GM12878 (cell line): ENCODE measurements at regions of chr4 and their contacts with region 1.

Region 1: DNA sequence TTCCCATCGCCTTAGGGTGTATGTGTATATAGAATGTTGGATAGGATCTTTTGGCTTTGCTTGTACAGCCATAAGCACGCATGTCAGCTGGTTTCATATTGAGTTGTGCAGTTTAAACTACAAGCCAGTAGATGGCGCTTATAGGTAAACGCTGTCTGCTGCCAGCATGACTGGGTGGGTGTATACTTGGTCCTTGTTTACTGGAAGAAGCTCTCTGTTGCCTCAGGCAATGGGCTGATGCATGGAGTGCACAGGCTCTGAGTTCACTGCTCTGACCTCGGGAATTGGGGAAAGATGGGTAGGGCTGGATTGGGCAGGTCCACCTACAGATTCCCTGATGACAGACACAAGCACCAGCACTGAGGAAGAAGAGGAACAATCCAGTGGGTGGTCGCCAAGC is 831.5 kb downstream of the STIM2 start:
- DNase-seq: no peak
- ATAC-seq: peak; percentile 90
- H3K4me3 ChIP-seq: no peak overlapping the region
- H3K27ac ChIP-seq: no peak overlapping the region
- H3K4me1 ChIP-seq: no peaks in the 10 kb centered on the region
- H3K27me3 ChIP-seq: no peaks in the 10 kb centered on the region
- CTCF ChIP-seq: peak; percentile 53 to 64 (median 53)
- EP300 ChIP-seq: no peak
- POLR2A ChIP-seq: no peak
- RAD21 ChIP-seq: peak; percentile 53

Region 2: DNA sequence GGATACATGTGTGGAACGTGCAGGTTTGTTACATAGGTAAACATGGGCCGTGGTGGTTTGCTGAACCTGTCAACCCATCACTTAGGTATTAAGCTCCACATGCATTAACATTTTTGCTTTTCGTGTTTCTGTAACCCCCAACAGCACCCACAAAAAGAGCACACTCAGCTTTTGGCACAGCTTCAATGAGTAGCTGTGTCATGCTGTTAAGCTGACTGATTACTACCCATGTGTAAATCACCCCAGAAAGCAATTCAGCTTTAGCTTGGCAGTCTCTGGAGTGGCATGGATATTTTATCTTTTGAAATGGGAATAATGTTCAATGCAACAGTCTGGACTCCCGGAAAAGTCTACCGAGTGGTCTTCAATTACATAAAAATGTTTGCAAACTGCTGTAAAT is 97.2 kb before region 1 on chr4:
- CTCF ChIA-PET with region 1: no interaction called
- POLR2A ChIA-PET with region 1: no interaction called
- RAD21 ChIA-PET with region 1: no interaction called
- SMC1A ChIA-PET with region 1: no interaction called
- in situ Hi-C with region 1: no loop called
- intact Hi-C with region 1: no loop called
- DNase-seq: no peak
- ATAC-seq: no peak
- H3K4me3 ChIP-seq: no peak overlapping the region
- H3K27ac ChIP-seq: no peak overlapping the region
- H3K4me1 ChIP-seq: no peaks in the 10 kb centered on the region
- H3K27me3 ChIP-seq: no peaks in the 10 kb centered on the region
- CTCF ChIP-seq: no peak
- EP300 ChIP-seq: no peak
- POLR2A ChIP-seq: no peak
- RAD21 ChIP-seq: no peak

Region 3: GRCh38 chr4:27702730-27703431 is 10.7 kb after region 1 on chr4:
- CTCF ChIA-PET with region 1: interaction called, 35 read pairs
- POLR2A ChIA-PET with region 1: no interaction called
- RAD21 ChIA-PET with region 1: interaction called, 5 read pairs
- SMC1A ChIA-PET with region 1: interaction called, 15 read pairs
- in situ Hi-C with region 1: no loop called
- intact Hi-C with region 1: no loop called
- DNase-seq: no peak
- ATAC-seq: peak; percentile 80
- H3K4me3 ChIP-seq: no peak overlapping the region
- H3K27ac ChIP-seq: no peak overlapping the region
- H3K4me1 ChIP-seq: no peaks in the 10 kb centered on the region
- H3K27me3 ChIP-seq: no peaks in the 10 kb centered on the region
- CTCF ChIP-seq: peak; percentile 10 to 52 (median 36); a peak in 3 of 6 replicates
- EP300 ChIP-seq: no peak
- POLR2A ChIP-seq: no peak
- RAD21 ChIP-seq: peak; percentile 36

Region 4: DNA sequence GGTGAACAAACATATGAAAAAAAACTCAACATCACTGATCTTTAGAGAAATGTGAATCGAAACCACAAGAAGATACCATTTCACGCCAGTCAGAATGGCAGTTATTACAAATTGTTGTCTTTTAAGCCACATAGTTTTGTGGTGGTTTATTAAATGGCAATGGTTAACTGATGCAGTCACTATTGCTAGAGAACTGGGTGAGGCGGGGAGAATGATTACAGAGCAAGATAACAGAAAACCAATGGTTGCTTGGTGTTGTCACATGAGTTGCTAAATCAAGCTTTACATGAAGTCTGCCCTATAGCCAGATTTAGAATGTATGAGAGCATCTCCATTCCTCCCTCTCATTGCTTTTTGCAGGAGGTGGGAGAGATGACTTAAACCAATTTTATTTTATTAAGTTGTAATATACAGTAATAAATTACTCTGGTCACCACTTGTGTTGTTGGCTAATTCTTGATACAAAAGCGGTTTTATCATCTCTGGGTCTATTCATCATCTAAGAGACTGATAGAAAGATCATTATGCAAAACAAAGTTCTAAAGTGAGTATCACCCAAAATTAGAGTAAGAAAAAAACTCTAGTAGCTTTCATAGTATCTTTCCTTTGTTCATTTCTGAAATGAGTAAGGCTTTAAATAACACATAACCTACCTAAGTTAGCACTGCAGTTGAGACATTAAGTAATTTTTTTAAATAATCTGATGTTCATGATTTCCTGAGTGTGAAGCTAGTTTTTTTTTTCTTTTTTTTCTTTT is 28.0 kb after region 1 on chr4:
- CTCF ChIA-PET with region 1: interaction called, 51 read pairs
- POLR2A ChIA-PET with region 1: no interaction called
- RAD21 ChIA-PET with region 1: interaction called, 13 read pairs
- SMC1A ChIA-PET with region 1: interaction called, 44 read pairs
- in situ Hi-C with region 1: no loop called
- intact Hi-C with region 1: no loop called
- DNase-seq: peak; percentile 36
- ATAC-seq: peak; percentile 90
- H3K4me3 ChIP-seq: no peak overlapping the region
- H3K27ac ChIP-seq: no peak overlapping the region
- H3K4me1 ChIP-seq: no peaks in the 10 kb centered on the region
- H3K27me3 ChIP-seq: no peaks in the 10 kb centered on the region
- CTCF ChIP-seq: no peak
- EP300 ChIP-seq: peak; percentile 64 to 73; a peak in 2 of 4 replicates
- POLR2A ChIP-seq: no peak
- RAD21 ChIP-seq: no peak

Region 5: DNA sequence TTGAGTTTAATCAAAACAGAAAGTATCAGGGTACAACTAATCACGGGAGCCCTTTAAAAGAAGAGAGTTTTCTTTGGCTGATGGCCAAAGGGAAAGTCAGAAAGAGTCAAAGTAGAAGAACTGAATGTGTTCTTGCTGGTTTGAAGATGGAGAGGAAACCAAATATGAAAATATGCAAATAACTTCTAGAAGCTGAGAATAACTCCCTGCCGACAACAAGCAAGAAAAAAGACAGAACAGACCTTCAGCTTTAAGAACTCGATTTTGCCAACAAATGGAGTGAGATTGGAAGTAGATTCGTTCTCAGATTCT is 72.3 kb after region 1 on chr4:
- CTCF ChIA-PET with region 1: interaction called, 16 read pairs
- POLR2A ChIA-PET with region 1: no interaction called
- RAD21 ChIA-PET with region 1: interaction called, 4 read pairs
- SMC1A ChIA-PET with region 1: interaction called, 9 read pairs
- in situ Hi-C with region 1: no loop called
- intact Hi-C with region 1: no loop called
- DNase-seq: peak; percentile 1
- ATAC-seq: peak; percentile 78
- H3K4me3 ChIP-seq: no peak overlapping the region
- H3K27ac ChIP-seq: no peak overlapping the region
- H3K4me1 ChIP-seq: no peaks in the 10 kb centered on the region
- H3K27me3 ChIP-seq: no peaks in the 10 kb centered on the region
- CTCF ChIP-seq: no peak
- EP300 ChIP-seq: no peak
- POLR2A ChIP-seq: no peak
- RAD21 ChIP-seq: no peak

Region 6: GRCh38 chr4:27779827-27780226 is 87.7 kb after region 1 on chr4:
- CTCF ChIA-PET with region 1: interaction called, 11 read pairs
- POLR2A ChIA-PET with region 1: no interaction called
- RAD21 ChIA-PET with region 1: no interaction called
- SMC1A ChIA-PET with region 1: interaction called, 3 read pairs
- in situ Hi-C with region 1: no loop called
- intact Hi-C with region 1: no loop called
- DNase-seq: no peak
- ATAC-seq: no peak
- H3K4me3 ChIP-seq: no peak overlapping the region
- H3K27ac ChIP-seq: no peak overlapping the region
- H3K4me1 ChIP-seq: no peaks in the 10 kb centered on the region
- H3K27me3 ChIP-seq: no peaks in the 10 kb centered on the region
- CTCF ChIP-seq: no peak
- EP300 ChIP-seq: no peak
- POLR2A ChIP-seq: no peak
- RAD21 ChIP-seq: no peak

Region 7: GRCh38 chr4:27791640-27792039 is 99.5 kb after region 1 on chr4:
- CTCF ChIA-PET with region 1: no interaction called
- POLR2A ChIA-PET with region 1: no interaction called
- RAD21 ChIA-PET with region 1: no interaction called
- SMC1A ChIA-PET with region 1: no interaction called
- in situ Hi-C with region 1: no loop called
- intact Hi-C with region 1: no loop called
- DNase-seq: no peak
- ATAC-seq: no peak
- H3K4me3 ChIP-seq: no peak overlapping the region
- H3K27ac ChIP-seq: no peak overlapping the region
- H3K4me1 ChIP-seq: no peaks in the 10 kb centered on the region
- H3K27me3 ChIP-seq: no peaks in the 10 kb centered on the region
- CTCF ChIP-seq: no peak
- EP300 ChIP-seq: no peak
- POLR2A ChIP-seq: no peak
- RAD21 ChIP-seq: no peak

Region 8: DNA sequence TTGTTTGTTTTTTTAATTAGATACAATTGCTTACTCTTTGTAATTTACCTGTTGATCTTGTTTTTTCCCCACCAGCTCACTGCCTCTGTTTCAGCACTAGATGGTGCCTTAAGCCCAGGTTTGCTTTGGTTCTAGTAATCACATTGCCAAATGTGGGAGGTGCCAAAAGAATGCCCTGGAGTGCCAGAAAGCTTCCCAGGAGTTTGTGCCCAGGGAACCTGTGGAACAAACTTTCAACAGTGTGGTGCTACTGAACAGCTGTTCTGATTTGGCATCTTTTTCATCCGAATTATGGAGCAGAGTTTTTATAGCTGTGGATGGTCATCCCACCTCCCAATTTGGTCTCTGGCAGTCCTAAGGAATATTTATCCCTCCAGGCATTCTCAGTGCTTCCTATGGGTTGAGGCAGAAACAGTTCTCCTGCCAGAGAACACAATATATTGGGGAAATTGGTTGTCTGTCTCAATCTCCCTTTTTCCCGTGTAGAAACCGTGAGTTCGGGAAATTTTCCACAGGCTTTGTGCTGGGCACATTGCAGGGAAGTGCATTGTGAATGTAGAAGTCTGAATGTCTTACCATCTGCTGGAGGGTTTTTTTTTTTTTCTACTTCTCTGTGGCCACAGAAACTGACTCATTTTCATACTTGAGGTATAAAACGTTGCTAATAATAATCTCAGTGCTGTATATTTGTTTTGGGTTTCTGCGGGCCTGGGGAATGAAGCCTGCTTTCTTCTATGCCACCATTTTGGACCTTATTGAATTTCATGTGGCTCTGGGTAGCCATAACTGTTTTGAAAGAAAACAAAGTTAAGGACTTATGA is 169.4 kb after region 1 on chr4:
- CTCF ChIA-PET with region 1: interaction called, 3 read pairs
- POLR2A ChIA-PET with region 1: no interaction called
- RAD21 ChIA-PET with region 1: no interaction called
- SMC1A ChIA-PET with region 1: interaction called, 6 read pairs
- in situ Hi-C with region 1: no loop called
- intact Hi-C with region 1: loop called (anchors 5 kb)
- DNase-seq: no peak
- ATAC-seq: peak; percentile 93
- H3K4me3 ChIP-seq: no peak overlapping the region
- H3K27ac ChIP-seq: no peak overlapping the region
- H3K4me1 ChIP-seq: no peaks in the 10 kb centered on the region
- H3K27me3 ChIP-seq: no peaks in the 10 kb centered on the region
- CTCF ChIP-seq: peak; percentile 19 to 36 (median 35); a peak in 3 of 6 replicates
- EP300 ChIP-seq: no peak
- POLR2A ChIP-seq: no peak
- RAD21 ChIP-seq: peak; percentile 32; the same call in 1 of the 2 replicates